ENCODE measurements at regions of chr21 and their contacts with region 1.

Region 1: DNA sequence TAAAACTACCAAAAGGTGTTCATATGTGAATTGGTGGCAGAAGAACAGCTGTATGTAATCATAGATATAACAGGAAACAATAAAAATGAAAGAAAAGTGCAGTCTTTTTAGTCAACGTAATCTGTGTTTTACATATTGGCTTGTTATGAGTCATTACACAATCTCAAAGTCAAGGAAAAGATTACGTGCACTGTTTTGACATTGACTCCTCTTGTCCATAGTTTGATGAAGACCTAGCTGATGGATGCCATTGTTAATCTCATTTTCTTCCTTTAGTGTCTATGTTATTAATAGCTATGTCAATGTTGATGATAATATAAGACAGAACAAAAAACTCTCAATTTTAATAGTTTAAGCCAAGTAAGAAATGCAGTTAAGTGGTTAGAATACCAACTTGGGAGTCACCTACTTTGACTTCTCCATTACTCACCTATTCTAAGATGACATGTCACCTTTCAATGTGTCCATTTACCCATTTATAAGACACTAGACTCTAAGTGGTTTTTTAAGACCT is 84.5 kb upstream of the SAMSN1 start:
- DNase-seq: no peak
- H3K4me3 Mint-ChIP-seq: no peak overlapping the region
- H3K27ac Mint-ChIP-seq: peak overlapping the region; percentile 62
- H3K4me1 Mint-ChIP-seq: peaks cover 24% of the 10 kb centered on the region
- H3K27me3 Mint-ChIP-seq: no peaks in the 10 kb centered on the region

Region 2: GRCh38 chr21:14591882-14592281 is 38.7 kb before region 1 on chr21:
- intact Hi-C with region 1: loop called (anchors 2 kb)
- DNase-seq: no peak
- H3K4me3 Mint-ChIP-seq: no peak overlapping the region
- H3K27ac Mint-ChIP-seq: peak overlapping the region; percentile 86
- H3K4me1 Mint-ChIP-seq: peaks cover 38% of the 10 kb centered on the region
- H3K27me3 Mint-ChIP-seq: no peaks in the 10 kb centered on the region

Region 3: DNA sequence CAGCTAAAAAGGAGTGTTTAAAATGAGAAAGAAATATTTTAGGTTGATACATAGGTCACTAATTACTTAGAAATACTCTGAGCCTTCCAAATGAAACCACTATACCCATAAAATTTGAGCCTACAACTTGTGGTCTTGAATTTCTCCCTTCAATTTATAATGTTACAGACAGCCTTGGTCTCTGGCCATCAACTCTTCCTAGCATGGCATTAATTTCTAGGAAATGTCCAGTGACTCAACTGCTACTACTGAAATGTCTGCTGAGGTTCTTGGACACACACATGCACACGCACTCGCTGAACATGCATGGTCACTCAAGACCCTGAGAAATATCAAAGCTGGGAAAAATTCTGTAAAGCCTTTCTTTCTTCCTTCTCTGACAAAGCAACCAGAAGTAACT is 23.4 kb before region 1 on chr21:
- intact Hi-C with region 1: no loop called
- DNase-seq: no peak
- H3K4me3 Mint-ChIP-seq: no peak overlapping the region
- H3K27ac Mint-ChIP-seq: no peak overlapping the region
- H3K4me1 Mint-ChIP-seq: peaks cover 45% of the 10 kb centered on the region
- H3K27me3 Mint-ChIP-seq: no peaks in the 10 kb centered on the region

Region 4: GRCh38 chr21:14620152-14620551 is 10.5 kb before region 1 on chr21:
- intact Hi-C with region 1: loop called (anchors 1 kb)
- DNase-seq: no peak
- H3K4me3 Mint-ChIP-seq: no peak overlapping the region
- H3K27ac Mint-ChIP-seq: peak overlapping the region; percentile 72
- H3K4me1 Mint-ChIP-seq: peaks cover 22% of the 10 kb centered on the region
- H3K27me3 Mint-ChIP-seq: no peaks in the 10 kb centered on the region

Region 5: DNA sequence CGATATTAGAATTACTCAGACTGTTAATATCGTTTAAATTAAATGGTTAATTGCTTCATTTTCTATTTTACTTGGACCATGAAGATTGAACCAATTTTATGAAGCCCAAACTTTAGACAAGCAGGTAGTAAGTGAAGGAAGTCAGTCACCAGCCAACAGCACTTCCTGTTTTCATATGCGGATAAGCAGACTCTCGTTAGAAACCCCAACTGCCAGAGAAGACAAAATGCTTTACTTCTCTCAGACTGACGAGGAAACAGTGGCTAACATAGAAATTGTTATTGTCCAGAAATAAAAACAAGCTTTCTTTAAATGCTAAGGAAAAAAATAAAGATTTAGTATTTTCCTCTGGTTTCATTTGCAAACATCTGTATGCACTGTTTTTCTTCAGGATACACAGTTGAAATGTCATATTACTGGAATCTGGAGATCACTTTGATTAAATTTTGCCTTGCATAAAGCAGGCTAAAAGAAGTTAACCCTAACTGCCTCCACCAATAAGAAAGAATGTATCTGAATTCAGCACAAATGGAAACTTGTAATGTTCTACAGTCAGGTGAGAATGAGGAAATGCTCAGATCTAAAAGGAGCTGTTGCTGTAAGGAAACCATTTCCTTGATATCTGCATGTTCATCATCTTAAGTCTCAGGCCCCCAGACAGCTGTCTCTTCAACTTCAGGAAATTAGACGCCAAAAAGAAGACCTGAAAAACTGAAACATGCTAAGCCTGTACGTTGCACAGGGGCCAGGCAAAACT is 45.3 kb after region 1 on chr21:
- intact Hi-C with region 1: loop called (anchors 5 kb)
- DNase-seq: no peak
- H3K4me3 Mint-ChIP-seq: peak overlapping the region; percentile 52
- H3K27ac Mint-ChIP-seq: peak overlapping the region; percentile 97
- H3K4me1 Mint-ChIP-seq: peaks cover 47% of the 10 kb centered on the region
- H3K27me3 Mint-ChIP-seq: no peaks in the 10 kb centered on the region